Lower leg skin (tissue), 4 donors: ENCODE measurements at regions of chr7 and their contacts with region 1.

Region 1: GRCh38 chr7:94250985-94251384 is 143.7 kb upstream of the COL1A2 start:
- DNase-seq: no peak
- H3K4me3 ChIP-seq: no peak overlapping the region
- CTCF ChIP-seq: no peak
- POLR2A ChIP-seq: no peak

Region 2: DNA sequence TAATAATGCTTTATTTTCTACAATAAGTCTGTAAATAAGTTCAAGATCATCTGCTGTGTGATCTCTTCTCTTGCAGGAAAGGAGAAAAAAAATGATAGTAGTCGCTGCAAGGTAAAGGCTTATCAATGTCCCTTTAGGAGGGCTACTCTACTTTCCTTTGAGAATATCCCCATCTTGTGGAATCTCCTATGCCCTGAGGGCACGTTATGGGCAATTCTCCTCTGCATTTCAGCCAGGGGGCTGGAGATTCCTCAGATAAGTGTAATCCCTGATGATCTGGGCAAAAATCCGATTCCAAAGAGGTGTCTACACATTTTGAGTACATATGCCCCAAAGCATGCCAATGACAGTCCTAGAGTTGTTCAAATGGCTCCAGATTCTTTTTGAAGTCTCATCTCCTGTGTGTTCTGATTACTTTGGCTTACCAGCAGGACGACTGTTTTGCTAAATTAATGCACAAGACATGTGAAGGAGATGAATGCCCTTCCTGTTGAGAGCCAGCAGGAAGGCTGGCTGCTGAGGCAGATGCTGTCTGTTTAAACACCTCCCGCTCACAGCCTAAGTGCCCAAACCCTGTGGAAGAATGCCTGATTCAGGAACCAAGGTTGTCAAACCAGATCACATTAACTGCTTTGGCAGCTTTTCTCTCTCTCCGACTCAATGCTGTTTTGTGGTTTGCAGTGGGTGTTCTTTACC is 27.5 kb before region 1 on chr7:
- intact Hi-C with region 1: loop called (anchors 2 kb)
- DNase-seq: no peak
- H3K4me3 ChIP-seq: no peak overlapping the region
- CTCF ChIP-seq: no peak
- POLR2A ChIP-seq: no peak